AG04449 (cell line): ENCODE measurements at regions of chr1 and their contacts with region 1.

Region 1: GRCh38 chr1:29793101-29793546 is 556.8 kb downstream of the PTPRU start:
- DNase-seq: peak; percentile 36
- H3K4me3 ChIP-seq: no peak overlapping the region
- CTCF ChIP-seq: peak; percentile 90

Region 2: GRCh38 chr1:29849038-29849750 is 56.1 kb after region 1 on chr1:
- CTCF ChIA-PET with region 1: interaction called, 11 read pairs
- POLR2A ChIA-PET with region 1: no interaction called
- DNase-seq: no peak
- H3K4me3 ChIP-seq: no peak overlapping the region
- CTCF ChIP-seq: peak; percentile 45

Region 3: DNA sequence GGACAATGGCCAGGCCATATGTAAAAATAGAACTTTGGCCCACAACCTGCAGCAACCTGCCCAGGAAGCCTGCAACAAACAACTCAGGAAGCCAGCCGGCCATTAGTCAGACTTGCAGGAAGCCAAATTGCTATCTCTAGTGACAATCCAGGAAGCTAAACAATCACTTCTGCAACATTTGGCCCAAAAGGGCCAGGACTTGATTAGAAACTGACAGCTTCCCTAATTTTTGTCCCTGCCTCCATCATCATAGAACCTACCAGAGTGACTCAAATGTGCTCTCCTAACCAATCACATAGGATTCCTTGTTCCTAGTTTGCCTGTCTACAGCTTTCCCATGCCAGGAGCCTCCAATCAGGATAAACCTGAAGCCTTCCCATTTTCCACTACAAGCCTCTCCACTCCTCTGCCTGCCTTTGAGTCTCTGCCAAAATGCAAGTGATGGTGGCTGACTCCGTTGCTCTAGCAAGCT is 82.5 kb after region 1 on chr1:
- CTCF ChIA-PET with region 1: no interaction called
- POLR2A ChIA-PET with region 1: no interaction called
- DNase-seq: no peak
- H3K4me3 ChIP-seq: no peak overlapping the region
- CTCF ChIP-seq: no peak

Region 4: DNA sequence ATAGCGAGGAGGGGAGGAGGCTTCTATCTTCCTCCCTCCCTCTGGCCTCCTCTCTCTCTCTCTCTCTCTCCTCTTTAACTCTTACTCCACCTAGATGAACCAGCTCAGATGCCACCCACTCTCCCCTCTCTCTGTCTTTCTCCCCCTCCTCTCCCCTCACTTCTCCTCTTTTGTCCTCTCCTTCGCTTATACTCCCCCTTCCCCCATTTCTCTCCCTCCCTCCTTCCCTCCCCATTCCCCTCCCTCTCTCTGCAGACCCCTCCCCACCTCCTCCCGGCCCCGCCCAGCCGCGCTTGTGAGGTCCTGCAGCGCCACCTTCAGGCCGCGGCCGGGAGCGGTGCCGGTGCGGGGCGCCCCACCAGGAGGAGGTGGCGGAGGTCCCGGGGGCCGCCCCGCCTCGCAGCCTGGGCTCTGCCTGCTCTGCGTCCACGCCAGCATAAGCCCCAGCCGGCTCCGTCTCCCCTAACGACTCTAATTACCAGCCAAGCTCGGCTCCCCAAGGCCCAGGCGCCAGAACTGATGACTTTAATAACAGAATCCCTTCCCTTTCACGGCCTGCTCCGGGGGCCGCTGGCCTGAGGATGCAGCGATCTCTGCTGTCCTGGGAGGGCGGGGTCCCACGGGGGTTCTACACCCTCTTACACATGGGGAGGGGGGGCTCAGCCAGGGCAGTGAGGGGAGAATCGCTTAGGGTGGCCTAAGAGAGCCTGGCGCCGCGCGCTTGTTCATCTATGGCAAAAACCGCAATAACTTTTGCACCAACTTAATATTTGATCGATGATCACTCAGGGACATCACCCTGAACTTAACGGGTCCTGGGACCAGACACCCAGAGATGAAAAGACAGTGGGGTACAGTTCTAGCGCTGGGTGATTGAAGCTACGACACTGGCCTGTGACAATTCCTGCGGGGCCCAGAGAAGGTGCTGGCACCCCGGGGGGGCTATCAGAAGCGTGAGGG is 293.0 kb after region 1 on chr1:
- CTCF ChIA-PET with region 1: interaction called, 17 read pairs
- POLR2A ChIA-PET with region 1: no interaction called
- DNase-seq: no peak
- H3K4me3 ChIP-seq: peak overlapping the region; percentile 34
- CTCF ChIP-seq: peak; percentile 82

Region 5: DNA sequence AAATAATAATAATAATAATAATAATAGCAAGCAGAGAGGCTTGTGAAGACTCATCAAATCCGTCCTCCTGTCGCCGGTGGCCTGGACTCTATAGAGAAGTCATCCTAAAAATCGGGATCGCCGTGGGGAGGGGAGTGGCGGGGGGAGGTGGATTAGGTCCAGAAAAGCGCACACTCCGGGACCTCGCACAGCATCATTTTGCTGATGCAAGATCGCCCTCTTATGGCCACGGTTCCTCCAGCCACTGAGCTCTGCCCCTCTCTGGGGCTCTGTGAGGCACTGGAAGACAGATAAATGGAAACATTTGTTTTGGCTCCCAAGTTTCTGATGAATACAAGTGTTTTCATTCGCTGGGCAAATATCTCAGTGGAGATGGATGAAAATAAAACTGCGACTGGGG is 318.3 kb after region 1 on chr1:
- CTCF ChIA-PET with region 1: interaction called, 34 read pairs
- POLR2A ChIA-PET with region 1: no interaction called
- DNase-seq: no peak
- H3K4me3 ChIP-seq: no peak overlapping the region
- CTCF ChIP-seq: peak; percentile 66